Ascending aorta (tissue), 2 donors: ENCODE measurements at regions of chrX and their contacts with region 1.

Region 1: GRCh38 chrX:110002300-110003166 is at the start of gene TMEM164:
- DNase-seq: peak; percentile 38 to 88
- H3K4me3 ChIP-seq: peak within 1 kb of the TSS; percentile 56 to 66
- H3K27ac ChIP-seq: peak within 1 kb of the TSS; percentile 59 to 83
- H3K4me1 ChIP-seq: no peaks in the 10 kb centered on the region
- H3K27me3 ChIP-seq: no peaks in the 10 kb centered on the region
- CTCF ChIP-seq: peak in 1 of 3 experiments; percentile 32
- total RNA-seq, gene TMEM164: 15.0 TPM

Region 2: GRCh38 chrX:109440475-109440874 is 562.1 kb before region 1 on chrX:
- intact Hi-C with region 1: no loop called
- DNase-seq: no peak
- H3K4me3 ChIP-seq: no peak overlapping the region
- H3K27ac ChIP-seq: no peak overlapping the region
- H3K4me1 ChIP-seq: no peaks in the 10 kb centered on the region
- H3K27me3 ChIP-seq: no peaks in the 10 kb centered on the region
- CTCF ChIP-seq: no peak

Region 3: GRCh38 chrX:109536439-109537336 is 465.8 kb before region 1 on chrX and contains the start of gene NXT2:
- intact Hi-C with region 1: loop called (anchors 2 kb)
- DNase-seq: peak; percentile 67 to 93
- H3K4me3 ChIP-seq: peak within 1 kb of the TSS; percentile 55 to 66
- H3K27ac ChIP-seq: peak within 1 kb of the TSS; percentile 86 to 89
- H3K4me1 ChIP-seq: no peaks in the 10 kb centered on the region
- H3K27me3 ChIP-seq: no peaks in the 10 kb centered on the region
- CTCF ChIP-seq: no peak
- total RNA-seq, gene NXT2: 1.8 TPM

Region 4: DNA sequence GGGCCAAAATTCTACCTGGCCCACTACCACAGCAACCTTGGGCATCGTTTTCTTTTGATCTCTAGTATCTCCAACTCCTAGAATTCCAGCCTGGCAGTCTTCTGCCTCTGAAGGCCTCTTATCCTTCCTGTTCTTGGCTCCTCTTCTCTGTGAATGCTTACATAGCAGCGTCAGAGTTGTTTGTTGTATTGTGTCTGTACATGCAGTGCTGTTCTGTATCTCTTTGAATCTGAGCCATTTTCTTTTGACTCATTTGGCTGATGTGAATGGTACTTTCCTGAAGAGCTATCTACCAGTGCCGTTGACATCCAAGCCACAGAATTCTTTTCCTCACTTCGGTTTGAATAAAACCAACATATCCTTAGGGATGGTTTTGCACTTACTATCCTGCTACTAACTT is 79.6 kb after region 1 on chrX:
- intact Hi-C with region 1: loop called (anchors 5 kb)
- DNase-seq: no peak
- H3K4me3 ChIP-seq: no peak overlapping the region
- H3K27ac ChIP-seq: peak overlapping the region; percentile 46 to 48
- H3K4me1 ChIP-seq: peaks cover 0 to 3% of the 10 kb centered on the region in 2 donors
- H3K27me3 ChIP-seq: no peaks in the 10 kb centered on the region
- CTCF ChIP-seq: no peak

Region 5: GRCh38 chrX:110412971-110413721 is 410.6 kb after region 1 on chrX:
- intact Hi-C with region 1: loop called (anchors 10 kb)
- DNase-seq: peak in 1 of 2 donors; percentile 77
- H3K4me3 ChIP-seq: no peak overlapping the region
- H3K27ac ChIP-seq: peak overlapping the region; percentile 48 to 71
- H3K4me1 ChIP-seq: peaks cover 0 to 7% of the 10 kb centered on the region in 2 donors
- H3K27me3 ChIP-seq: no peaks in the 10 kb centered on the region
- CTCF ChIP-seq: peak; percentile 74 to 88 (median 79)

Region 6: DNA sequence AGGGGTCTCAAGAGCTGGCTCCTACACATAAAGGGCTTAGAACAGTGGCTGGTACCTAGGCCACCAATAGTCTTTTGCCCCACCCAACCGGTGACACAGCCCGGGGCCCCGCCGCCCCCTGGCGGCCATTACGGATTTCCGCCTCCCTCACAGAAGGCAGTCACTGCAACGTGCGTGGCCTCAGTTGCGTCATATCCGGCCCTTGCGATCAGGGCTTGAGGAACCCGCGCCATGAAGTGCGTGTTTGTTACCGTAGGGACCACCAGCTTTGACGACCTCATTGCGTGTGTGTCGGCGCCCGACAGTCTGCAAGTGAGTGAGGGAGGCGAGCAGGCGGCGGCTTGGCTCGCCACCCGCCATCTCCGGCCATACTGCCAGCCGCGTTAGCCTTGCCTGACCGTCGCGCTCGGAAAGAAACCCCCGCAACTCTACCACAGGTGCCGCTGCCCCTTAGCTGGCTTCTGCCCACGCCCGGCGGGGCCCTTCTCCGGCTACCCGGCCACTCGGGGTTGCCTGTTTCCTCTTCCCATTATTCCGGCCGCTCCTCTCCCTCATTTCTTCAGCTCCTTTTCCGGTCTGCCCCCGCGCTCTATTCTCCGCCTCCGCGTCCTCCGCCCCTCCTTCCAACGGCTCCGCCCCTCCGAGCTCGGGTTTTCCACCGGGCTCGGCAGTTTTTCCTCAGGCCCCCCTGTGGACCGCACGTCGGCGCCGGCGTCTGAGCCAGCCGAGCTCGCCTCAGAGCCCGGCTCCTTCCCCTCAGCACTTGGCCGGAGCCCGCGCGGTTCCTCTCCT is 1678.7 kb after region 1 on chrX and contains the start of gene ALG13:
- intact Hi-C with region 1: loop called (anchors 5 kb)
- DNase-seq: peak; percentile 67 to 93
- H3K4me3 ChIP-seq: peak within 1 kb of the TSS; percentile 78
- H3K27ac ChIP-seq: peak within 1 kb of the TSS; percentile 97 to 98
- H3K4me1 ChIP-seq: no peaks in the 10 kb centered on the region
- H3K27me3 ChIP-seq: no peaks in the 10 kb centered on the region
- CTCF ChIP-seq: peak; percentile 56 to 68 (median 64)
- total RNA-seq, gene ALG13: 21.1 TPM